Psoas muscle (tissue), 8 donors: ENCODE measurements at regions of chr9 and their contacts with region 1.

Region 1: GRCh38 chr9:93173365-93174051 is 10.4 kb upstream of the WNK2 start:
- DNase-seq: no peak
- ATAC-seq: no peak
- H3K4me3 ChIP-seq: no peak overlapping the region
- H3K27ac ChIP-seq: no peak overlapping the region
- H3K4me1 ChIP-seq: peaks cover 4% of the 10 kb centered on the region
- H3K27me3 ChIP-seq: no peaks in the 10 kb centered on the region
- CTCF ChIP-seq: no peak

Region 2: DNA sequence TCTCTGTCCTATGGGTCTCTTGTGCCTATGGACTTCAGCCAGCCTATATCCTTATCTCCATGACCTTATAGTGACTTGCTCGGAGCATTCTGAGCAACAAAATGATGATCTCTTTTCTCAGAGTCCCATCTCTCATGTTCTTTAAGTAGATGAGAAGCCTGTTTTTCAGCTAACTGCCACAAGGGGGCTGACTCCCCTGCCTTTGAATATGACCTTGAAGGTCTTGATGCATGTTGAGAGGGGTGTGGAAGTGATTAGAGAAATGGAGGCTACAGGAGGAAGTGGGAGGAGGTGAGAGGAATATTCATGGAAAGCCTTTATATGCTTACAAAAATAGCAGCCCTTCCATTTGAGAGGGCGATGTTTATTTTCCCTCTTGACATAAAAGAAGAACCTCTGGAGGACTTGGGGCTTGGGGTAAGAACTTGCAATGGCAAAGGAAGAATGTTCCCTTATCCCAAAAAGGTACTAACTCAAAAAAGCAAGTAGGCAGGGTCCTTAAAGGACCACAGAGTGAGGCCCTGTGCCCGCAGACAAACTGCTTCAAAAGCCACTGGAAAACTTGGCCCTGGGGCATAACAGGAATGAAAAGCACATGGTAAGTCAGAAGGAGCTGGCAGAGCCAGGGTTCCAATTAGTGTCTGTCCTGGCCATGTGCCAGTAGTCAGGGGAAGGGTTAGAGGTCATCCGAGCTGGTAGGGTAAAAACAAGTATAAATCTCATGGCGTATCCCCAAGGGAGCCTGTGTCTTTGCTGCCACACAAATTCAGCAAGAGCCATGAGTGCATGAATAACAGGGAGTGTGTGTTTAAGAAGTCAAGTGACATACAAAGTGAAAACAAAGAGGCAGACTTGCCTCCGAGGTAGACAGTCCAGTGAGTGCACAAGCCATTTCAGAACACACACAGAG is 187.1 kb before region 1 on chr9:
- intact Hi-C with region 1: loop called in 1 of 2 experiments (anchors 10 kb)
- DNase-seq: no peak
- ATAC-seq: no peak
- H3K4me3 ChIP-seq: no peak overlapping the region
- H3K27ac ChIP-seq: no peak overlapping the region
- H3K4me1 ChIP-seq: no peaks in the 10 kb centered on the region
- H3K27me3 ChIP-seq: no peaks in the 10 kb centered on the region
- CTCF ChIP-seq: peak; percentile 35

Region 3: DNA sequence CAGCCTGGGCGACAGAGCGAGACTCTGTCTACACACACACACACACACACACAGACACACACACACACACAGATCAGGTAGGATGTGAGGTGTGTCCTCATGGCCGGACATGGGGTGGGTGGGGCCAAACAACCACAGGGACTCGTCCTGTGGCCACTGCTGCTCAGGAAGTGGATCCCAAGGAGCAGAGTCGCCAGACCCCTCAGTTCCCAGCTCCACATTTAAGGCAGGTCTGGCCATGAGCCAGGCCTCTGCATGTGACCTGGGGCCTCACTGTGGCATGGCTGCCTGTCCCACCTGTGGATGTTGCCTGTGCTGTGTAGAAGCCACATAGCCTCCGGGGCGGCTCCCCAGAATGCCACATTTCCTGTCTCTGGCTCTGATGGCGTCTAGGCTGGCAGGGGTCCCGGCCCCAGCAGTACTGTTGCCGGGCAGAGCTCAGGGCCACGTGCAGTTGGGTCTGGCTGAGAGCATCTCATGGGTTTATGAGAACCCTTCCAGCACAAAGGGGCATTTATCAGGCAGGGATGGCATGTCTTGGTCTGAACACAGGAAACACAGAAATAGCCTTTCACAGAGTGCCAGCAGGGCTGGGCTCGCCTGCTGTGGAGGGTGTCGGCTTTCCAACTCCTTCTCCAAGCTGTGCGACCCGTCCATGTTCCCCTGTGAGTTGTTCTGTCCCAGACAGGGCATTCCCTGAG is 29.5 kb before region 1 on chr9:
- intact Hi-C with region 1: loop called in 1 of 2 experiments (anchors 2 kb)
- DNase-seq: peak; percentile 40 to 83
- ATAC-seq: peak; percentile 73 to 85 (median 80)
- H3K4me3 ChIP-seq: no peak overlapping the region
- H3K27ac ChIP-seq: peak overlapping the region; percentile 76
- H3K4me1 ChIP-seq: peaks cover 14% of the 10 kb centered on the region
- H3K27me3 ChIP-seq: no peaks in the 10 kb centered on the region
- CTCF ChIP-seq: no peak

Region 4: GRCh38 chr9:93262537-93263242 is 89.2 kb after region 1 on chr9:
- intact Hi-C with region 1: no loop called
- DNase-seq: peak in 1 of 2 donors; percentile 69
- ATAC-seq: peak; percentile 63 to 88 (median 84)
- H3K4me3 ChIP-seq: no peak overlapping the region
- H3K27ac ChIP-seq: peak overlapping the region; percentile 44
- H3K4me1 ChIP-seq: peaks cover 9% of the 10 kb centered on the region
- H3K27me3 ChIP-seq: no peaks in the 10 kb centered on the region
- CTCF ChIP-seq: no peak

Region 5: GRCh38 chr9:93453047-93453914 is 279.8 kb after region 1 on chr9 and contains the start of gene FAM120AOS:
- intact Hi-C with region 1: no loop called
- DNase-seq: peak; percentile 91 to 93
- ATAC-seq: peak; percentile 77 to 87 (median 81)
- H3K4me3 ChIP-seq: peak within 1 kb of the TSS; percentile 80
- H3K27ac ChIP-seq: peak within 1 kb of the TSS; percentile 98
- H3K4me1 ChIP-seq: peaks cover 50% of the 10 kb centered on the region
- H3K27me3 ChIP-seq: no peaks in the 10 kb centered on the region
- CTCF ChIP-seq: no peak
- total RNA-seq, gene FAM120AOS: 26.8 to 35.1 (median 29.9) TPM

Region 6: DNA sequence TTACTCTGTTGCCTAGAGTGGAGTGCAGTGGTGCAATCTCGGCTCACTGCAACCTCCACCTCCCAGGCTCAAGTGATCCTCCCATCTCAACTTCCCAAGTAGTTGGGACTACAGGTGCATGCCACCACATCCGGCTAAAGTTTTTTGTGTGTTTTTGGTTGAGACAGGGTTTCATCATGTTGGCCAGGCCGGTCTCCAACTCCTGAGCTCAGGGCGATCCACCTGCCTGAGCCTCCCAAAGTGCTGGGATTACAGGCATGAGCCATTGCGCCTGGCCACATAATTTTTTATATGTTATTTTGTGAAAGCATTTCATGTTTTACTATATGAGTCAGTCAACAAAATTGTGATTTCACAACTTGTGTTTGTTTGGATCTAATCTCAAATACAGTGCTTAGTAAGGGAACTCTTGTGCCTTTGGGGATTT is 299.8 kb after region 1 on chr9:
- intact Hi-C with region 1: no loop called
- DNase-seq: no peak
- ATAC-seq: no peak
- H3K4me3 ChIP-seq: no peak overlapping the region
- H3K27ac ChIP-seq: no peak overlapping the region
- H3K4me1 ChIP-seq: peaks cover 36% of the 10 kb centered on the region
- H3K27me3 ChIP-seq: no peaks in the 10 kb centered on the region
- CTCF ChIP-seq: no peak